Esophagus squamous epithelium (tissue), 5 donors: ENCODE measurements at regions of chr12 and their contacts with region 1.

Region 1: DNA sequence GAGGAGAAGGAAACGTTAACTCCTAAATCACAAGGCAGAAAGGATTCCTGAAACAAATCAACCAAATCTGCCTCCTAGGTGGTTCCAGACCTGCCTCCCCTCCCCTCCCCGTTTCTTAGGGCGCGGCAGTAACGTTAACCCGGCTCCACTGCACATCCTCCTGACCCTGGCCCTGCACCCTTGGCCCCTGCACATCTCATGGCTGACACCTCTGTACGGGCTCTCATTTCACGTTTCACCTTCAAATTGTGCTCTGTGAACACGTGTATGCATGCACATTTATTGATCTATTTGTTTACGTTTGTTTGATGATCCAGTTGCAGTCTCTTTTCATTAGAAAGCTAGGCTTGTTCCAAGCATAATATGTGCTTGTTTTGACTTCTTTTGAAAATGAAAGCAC is 358.1 kb downstream of the ADGRD1 start:
- DNase-seq: no peak
- H3K4me3 ChIP-seq: no peak overlapping the region
- H3K27ac ChIP-seq: no peak overlapping the region
- H3K4me1 ChIP-seq: no peaks in the 10 kb centered on the region
- H3K27me3 ChIP-seq: peaks cover 0 to 38% (median 0%) of the 10 kb centered on the region in 4 donors
- CTCF ChIP-seq: no peak
- POLR2A ChIP-seq: no peak

Region 2: DNA sequence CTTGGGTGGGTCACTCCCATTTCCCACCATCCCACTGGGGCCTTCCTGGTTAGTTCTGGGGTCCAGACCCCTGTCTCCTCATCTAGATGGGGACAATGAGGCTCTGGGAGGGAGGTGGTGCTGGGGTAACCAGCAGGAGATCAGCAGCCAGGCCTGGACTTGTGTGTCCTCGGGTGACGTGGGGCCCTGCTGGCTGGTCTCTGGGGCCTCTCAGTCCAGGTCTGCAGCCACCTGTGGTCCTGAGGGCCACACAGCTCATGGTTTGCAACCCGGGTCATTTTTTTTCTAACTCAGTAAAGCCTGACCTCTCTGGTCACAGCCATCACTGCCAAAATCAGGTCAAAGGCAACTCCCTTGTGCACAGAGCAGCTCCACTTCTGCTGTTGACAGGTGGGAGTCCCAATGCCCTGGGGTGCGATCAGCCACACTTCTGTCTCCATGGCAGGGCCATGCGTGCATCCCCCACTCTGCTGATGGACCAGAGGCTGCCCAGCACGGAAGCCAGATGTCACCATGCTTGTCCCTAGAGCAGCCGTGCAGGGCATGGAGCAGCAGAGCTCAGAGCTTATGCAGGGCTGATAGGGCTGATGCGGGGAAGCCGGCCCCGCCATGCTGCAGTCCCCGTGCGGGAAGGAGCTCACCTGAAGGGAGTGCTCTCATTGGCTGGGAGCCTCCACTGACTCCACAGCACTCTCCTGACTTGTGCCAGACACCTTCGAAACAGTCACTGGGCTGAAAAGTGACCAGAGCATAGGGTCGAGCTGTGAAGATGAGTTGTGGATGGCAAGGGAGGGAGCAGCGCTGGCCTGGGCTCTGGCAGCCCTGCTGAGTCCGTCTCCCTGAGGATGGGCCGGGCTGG is 107.1 kb before region 1 on chr12:
- intact Hi-C with region 1: no loop called
- DNase-seq: no peak
- H3K4me3 ChIP-seq: no peak overlapping the region
- H3K27ac ChIP-seq: no peak overlapping the region
- H3K4me1 ChIP-seq: no peaks in the 10 kb centered on the region
- H3K27me3 ChIP-seq: peaks cover 0 to 19% (median 0%) of the 10 kb centered on the region in 4 donors
- CTCF ChIP-seq: no peak
- POLR2A ChIP-seq: no peak

Region 3: DNA sequence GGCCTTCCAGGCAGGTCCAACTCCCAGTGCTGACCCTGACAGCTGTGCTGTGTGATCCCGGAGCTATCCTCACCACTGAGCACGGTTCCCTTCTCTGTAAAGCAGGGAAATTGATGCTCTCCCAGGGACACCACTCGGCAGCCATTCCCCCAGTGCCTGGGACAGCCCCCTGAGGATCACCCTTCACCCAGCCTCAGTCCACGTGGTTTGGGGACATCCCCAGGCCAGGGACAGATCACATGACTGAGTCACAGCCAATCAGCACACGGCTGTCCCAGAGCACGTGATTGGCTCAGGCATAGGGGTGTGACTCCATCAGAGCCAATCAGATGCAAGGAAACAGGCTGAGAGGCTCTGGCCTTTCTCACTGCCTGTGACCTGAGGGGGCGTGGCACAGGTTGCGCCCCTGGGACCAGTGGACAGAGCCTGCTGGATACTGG is 330.4 kb after region 1 on chr12:
- intact Hi-C with region 1: loop called (anchors 5 kb)
- DNase-seq: no peak
- H3K4me3 ChIP-seq: no peak overlapping the region
- H3K27ac ChIP-seq: no peak overlapping the region
- H3K4me1 ChIP-seq: no peaks in the 10 kb centered on the region
- H3K27me3 ChIP-seq: peaks cover 0 to 67% (median 0%) of the 10 kb centered on the region in 4 donors
- CTCF ChIP-seq: no peak
- POLR2A ChIP-seq: no peak